ENCODE measurements at regions of chr7 and their contacts with region 1.

Region 1: GRCh38 chr7:100852048-100852872 is at the start of gene SLC12A9:
- DNase-seq: peak; percentile 33
- H3K4me3 ChIP-seq: peak within 1 kb of the TSS; percentile 76
- CTCF ChIP-seq: peak; percentile 97

Region 2: GRCh38 chr7:100611974-100612729 is 240.1 kb before region 1 on chr7 and contains the start of gene MOSPD3:
- CTCF ChIA-PET with region 1: interaction called, 11 read pairs
- POLR2A ChIA-PET with region 1: no interaction called
- DNase-seq: peak; percentile 94
- H3K4me3 ChIP-seq: peak within 1 kb of the TSS; percentile 68
- CTCF ChIP-seq: no peak

Region 3: GRCh38 chr7:100719523-100720319 is 132.5 kb before region 1 on chr7:
- CTCF ChIA-PET with region 1: interaction called, 116 read pairs
- POLR2A ChIA-PET with region 1: no interaction called
- DNase-seq: no peak
- H3K4me3 ChIP-seq: no peak overlapping the region
- CTCF ChIP-seq: peak; percentile 47

Region 4: DNA sequence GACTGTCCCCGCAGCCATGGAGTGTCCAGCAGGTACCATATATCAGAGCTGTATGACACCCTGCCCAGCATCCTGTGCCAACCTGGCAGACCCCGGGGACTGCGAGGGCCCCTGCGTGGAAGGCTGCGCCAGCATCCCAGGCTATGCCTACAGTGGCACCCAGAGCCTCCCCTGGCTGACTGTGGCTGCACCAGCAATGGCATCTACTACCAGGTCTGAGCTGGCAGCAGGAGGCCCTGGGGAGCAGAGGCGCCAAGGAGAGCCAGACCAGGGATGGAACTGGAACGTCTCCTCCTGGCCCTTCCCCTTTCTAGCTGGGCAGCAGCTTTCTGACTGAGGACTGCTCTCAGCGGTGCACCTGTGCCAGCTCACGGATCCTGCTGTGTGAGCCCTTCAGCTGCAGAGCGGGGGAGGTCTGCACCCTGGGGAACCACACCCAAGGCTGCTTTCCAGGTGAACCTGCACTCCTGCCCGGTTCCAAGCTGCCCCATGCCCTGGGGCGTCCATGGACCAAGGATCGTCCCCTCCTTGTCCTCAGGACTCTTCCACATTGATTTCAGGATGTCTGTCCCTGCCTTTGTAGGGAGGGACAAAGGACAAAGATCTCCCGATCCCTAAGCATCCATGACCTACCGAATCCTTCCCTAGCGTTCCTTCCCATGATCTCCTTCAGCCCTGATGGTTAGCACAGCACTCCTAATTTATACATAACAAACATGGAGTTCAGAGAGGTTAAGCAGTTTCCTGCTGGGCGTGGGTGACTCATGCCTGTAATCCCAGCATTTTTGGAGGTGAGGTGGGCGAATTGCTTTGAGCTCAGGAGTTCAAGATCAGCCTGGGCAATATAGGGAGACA is 58.2 kb before region 1 on chr7:
- CTCF ChIA-PET with region 1: interaction called, 61 read pairs
- POLR2A ChIA-PET with region 1: interaction called, 3 read pairs
- DNase-seq: no peak
- H3K4me3 ChIP-seq: no peak overlapping the region
- CTCF ChIP-seq: no peak

Region 5: GRCh38 chr7:100827330-100828227 is 24.7 kb before region 1 on chr7 and contains the start of gene EPHB4:
- CTCF ChIA-PET with region 1: interaction called, 53 read pairs
- POLR2A ChIA-PET with region 1: interaction called, 8 read pairs
- DNase-seq: no peak
- H3K4me3 ChIP-seq: peak within 1 kb of the TSS; percentile 74
- CTCF ChIP-seq: peak; percentile 61

Region 6: DNA sequence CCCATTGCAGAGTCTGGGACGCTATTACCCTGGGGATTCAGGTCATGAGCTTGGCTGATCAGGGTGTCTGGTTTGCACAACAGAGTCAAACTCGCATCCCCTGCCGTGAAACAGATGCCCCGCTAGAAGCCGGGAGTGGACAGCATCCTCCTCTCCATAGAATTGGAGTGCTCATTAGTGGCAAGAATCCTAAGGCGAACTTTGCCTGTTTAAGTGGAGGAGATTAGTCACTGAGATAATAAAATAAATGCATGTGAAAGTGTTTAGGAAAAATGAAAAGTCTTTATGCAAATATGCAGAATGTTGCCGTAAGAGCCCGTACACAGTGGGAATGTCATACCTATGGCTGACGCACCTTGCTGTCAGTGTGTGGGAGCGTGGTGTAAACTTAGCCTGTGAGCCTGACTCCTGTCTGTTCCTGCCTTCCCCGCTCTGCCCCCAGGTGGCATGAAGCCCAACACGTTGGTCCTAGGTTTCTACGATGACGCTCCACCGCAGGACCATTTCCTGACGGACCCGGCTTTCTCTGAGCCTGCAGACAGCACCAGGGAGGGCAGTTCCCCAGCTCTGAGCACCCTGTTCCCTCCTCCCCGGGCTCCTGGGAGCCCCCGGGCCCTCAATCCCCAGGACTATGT is 13.1 kb after region 1 on chr7:
- CTCF ChIA-PET with region 1: interaction called, 15 read pairs
- POLR2A ChIA-PET with region 1: interaction called, 7 read pairs
- DNase-seq: no peak
- H3K4me3 ChIP-seq: no peak overlapping the region
- CTCF ChIP-seq: no peak

Region 7: GRCh38 chr7:100933735-100934134 is 81.5 kb after region 1 on chr7:
- CTCF ChIA-PET with region 1: no interaction called
- POLR2A ChIA-PET with region 1: no interaction called
- DNase-seq: no peak
- H3K4me3 ChIP-seq: no peak overlapping the region
- CTCF ChIP-seq: no peak